ENCODE measurements at regions of chr10 and their contacts with region 1.

Region 1: DNA sequence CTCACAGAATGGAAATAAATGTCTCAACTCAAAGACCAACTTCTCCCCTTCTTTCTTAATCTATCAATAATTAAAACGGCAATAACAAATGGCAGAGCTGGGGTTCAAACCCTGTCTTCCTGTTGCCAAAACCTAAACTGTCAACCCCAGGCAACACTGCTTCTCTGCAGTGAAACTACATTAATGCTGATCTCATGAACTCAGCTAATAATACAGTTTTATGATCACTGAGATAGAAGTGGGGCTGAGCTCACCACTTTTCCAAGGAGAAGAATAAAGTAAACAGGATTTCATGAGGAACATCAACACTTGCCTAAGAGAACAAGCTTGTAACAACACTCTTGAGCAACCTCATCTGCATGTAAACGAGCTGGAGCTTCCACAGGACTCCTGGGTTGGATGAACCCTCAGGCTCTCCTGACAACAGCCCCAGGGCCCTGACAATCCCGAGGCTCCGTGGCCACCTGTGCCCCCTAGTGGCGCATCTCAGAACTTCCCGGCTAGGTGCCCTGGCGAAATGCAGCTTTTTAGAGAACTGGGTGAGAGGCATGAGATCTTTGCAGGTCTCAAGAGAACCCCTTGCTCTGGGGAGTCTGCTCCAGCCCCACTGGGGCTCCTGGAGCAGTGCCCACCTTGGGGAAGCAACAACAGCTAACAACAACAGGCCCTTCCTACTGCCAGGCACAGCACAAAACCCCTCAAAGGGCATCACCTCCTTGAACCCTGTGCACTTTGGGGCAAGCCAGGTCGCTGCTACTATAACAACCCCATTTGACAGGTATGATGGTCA is 169.3 kb downstream of the SH3PXD2A start:
- DNase-seq: peak; percentile 71 to 85
- ATAC-seq: peak; percentile 71

Region 2: GRCh38 chr10:103096153-103096552 is 589.9 kb before region 1 on chr10:
- intact Hi-C with region 1: no loop called
- DNase-seq: no peak
- ATAC-seq: no peak

Region 3: GRCh38 chr10:103598654-103599115 is 87.4 kb before region 1 on chr10:
- intact Hi-C with region 1: loop called (anchors 5 to 10 kb)
- DNase-seq: peak; percentile 59 to 73
- ATAC-seq: peak; percentile 79

Region 4: GRCh38 chr10:103605359-103606095 is 80.5 kb before region 1 on chr10:
- intact Hi-C with region 1: loop called in 1 of 2 experiments (anchors 10 kb)
- DNase-seq: peak in 1 of 2 donors; percentile 47
- ATAC-seq: peak; percentile 26

Region 5: DNA sequence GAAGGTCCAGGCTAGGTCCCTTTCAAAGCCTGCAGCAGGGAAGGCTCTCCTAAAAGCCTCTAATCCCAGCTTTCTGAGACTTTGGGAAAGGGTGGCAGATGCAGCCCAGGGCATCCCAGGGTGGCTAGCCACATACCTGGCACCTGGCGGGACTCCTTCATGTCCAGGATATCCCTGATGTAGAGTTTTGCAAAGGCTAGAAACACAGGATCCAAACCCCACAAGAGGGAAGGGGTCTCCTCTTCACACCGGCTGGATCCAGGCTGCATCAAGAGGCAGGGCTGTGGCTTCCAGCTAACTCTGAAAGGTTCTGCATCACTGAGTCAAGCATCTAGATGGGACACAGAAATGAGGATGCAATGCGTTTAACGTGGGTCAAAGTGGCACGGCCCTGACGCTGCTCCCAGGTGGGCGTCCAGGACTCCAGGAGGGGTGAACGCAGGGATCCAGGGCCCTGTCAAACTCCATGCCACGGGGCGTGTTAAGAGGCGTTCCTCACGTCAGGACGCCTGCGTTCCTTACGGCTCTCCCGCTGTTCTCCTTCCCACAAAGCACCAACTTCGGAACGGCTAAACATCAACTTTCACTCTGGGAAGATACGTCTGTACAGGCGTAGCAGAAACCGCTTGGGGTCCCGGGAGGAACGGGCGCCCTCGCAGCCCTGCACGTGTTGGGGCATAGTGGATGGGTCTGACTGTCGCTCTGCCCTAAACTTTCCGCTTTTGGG is 231.4 kb after region 1 on chr10:
- intact Hi-C with region 1: no loop called
- DNase-seq: peak; percentile 61 to 74
- ATAC-seq: peak; percentile 51